Lower leg skin (tissue), 4 donors: ENCODE measurements at regions of chr1 and their contacts with region 1.

Region 1: GRCh38 chr1:184399192-184399847 is 12.5 kb downstream of the C1orf21 start:
- DNase-seq: no peak
- H3K4me3 ChIP-seq: no peak overlapping the region
- CTCF ChIP-seq: no peak
- POLR2A ChIP-seq: no peak

Region 2: DNA sequence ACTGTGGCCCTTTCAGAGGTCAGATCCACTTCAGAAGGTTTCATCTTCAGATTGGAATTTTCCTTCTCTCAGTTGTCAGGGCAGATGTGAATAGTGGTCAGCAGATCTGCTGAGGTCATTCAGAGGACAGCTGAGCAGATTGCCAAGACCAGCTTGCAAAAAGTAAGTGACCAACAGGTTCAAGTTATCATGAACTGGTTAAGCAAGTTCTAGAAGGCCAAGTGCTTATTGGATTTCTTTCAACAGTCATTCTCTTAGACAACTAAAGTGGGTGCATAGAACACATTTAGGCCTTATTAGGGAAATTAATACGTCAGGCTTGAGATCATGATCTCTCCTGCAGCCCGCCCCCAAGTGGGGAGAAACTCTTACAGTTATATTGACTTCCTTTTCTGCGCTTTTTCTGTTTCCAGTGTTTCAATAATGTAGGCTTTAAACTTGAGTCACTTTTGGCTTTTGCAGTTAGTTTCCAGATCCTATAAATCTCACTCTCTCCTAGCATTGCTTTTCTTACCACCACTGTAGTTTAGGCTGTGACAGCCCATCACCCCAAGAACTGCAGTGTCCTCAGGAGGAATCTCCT is 83.9 kb after region 1 on chr1:
- intact Hi-C with region 1: no loop called
- DNase-seq: no peak
- H3K4me3 ChIP-seq: no peak overlapping the region
- CTCF ChIP-seq: no peak
- POLR2A ChIP-seq: no peak

Region 3: DNA sequence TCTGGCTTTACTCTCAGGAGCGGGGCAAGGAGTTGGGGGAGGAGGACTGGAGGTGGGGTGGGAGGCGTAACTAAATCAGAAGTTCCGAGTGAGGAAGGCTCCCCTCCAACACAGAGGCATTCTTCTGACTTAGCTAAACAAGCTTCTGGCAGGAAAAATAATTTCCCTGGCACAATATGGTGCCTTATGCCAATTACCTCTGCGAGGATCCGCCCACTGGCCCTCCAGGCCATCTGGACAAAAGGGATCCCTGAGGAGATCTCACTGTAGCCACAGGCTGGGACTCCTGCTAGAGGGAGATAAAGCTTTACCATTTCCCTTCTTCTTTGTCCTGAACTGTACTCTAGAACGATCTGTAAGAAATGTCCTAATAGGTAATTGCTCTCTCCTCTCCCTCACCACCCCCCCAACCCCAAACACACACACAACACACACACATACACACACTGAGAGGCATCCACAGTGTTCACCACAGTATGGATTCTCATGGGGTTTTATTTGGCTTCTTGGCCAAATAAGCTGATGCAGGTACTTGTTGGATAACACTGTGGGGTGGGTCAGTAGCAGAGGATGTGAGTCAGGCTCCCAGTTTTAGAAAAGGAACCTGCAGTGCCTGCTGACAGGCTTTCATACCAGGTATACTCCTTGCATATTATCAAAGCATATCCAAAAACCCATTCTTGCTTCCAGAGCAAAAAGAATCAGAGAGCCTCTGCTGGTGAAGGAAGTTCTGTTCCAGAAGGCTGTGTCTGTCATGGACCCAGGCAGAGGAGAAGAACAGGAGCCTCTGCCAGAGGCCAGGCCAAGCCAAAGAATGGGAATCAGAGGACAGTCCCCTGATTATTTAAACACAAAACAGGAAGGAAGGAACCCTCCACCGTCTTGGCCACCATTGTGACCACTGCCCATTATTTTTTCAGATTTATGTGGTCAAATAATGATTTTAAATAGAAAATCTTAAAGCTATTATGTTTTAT is 156.6 kb after region 1 on chr1:
- intact Hi-C with region 1: loop called (anchors 10 kb)
- DNase-seq: no peak
- H3K4me3 ChIP-seq: no peak overlapping the region
- CTCF ChIP-seq: no peak
- POLR2A ChIP-seq: no peak